HepG2 (cell line): ENCODE measurements at regions of chr1 and their contacts with region 1.

Region 1: DNA sequence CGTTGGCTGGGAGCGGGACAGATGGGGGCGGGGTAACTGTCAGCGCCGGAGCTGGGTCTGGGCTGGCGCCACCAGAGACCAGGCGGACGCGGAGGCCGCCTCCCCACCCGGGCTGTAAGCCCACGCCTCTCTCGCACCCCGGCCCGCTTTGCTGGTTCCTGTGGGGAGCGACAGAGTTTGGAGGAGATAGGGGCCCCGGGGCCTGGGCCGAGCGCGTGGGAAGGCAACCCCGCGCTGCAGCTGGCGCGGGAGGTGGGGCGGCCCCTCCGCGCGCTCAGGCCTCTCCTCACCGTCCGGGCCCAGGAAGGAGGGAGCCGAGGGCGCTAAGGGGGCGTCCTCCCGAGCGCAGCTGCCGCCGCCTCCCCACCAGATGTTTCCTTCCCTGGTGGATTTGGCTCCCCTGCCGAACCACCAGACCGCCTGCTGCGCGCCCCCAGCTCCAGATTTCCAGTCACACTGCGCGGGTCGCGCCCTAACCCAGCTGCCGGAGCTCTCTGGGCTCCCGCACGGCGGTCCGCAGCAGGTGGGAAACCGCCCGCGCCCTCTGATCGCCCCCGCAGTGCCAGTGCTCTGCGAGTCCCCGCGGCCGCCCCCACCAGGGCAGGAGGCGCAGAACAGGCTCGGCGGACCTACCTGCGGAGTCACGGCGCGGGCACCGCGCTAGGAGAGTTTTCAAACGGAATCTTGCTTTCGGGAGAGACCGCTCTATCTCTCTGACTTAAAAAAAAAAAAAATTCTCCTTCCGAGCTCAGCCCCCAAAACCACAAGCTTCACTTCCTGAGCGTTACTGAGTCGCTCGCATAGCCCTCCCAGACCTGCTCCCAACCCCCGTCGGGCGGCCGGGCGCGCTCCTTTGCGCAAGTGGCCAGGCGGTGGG is 1.1 kb downstream of the GFI1 start:
- DNase-seq: peak; percentile 49
- ATAC-seq: peak; percentile 86
- H3K4me3 ChIP-seq: peak overlapping the region; percentile 68 to 89 (median 87)
- H3K27ac ChIP-seq: peak overlapping the region; percentile 77
- H3K4me1 ChIP-seq: peaks cover 24% of the 10 kb centered on the region
- H3K27me3 ChIP-seq: no peaks in the 10 kb centered on the region; a peak in 2 of 5 replicates
- CTCF ChIP-seq: peak; percentile 77
- EP300 ChIP-seq: no peak
- POLR2A ChIP-seq: peak; percentile 48 to 56; a peak in 3 of 4 replicates
- RAD21 ChIP-seq: no peak; the same call in 1 of the 2 replicates

Region 2: GRCh38 chr1:92244376-92244775 is 241.2 kb before region 1 on chr1:
- CTCF ChIA-PET with region 1: no interaction called
- POLR2A ChIA-PET with region 1: no interaction called
- in situ Hi-C with region 1: no loop called
- intact Hi-C with region 1: no loop called
- DNase-seq: no peak
- ATAC-seq: no peak
- H3K4me3 ChIP-seq: no peak overlapping the region
- H3K27ac ChIP-seq: no peak overlapping the region
- H3K4me1 ChIP-seq: no peaks in the 10 kb centered on the region
- H3K27me3 ChIP-seq: no peaks in the 10 kb centered on the region
- CTCF ChIP-seq: no peak
- EP300 ChIP-seq: no peak
- POLR2A ChIP-seq: no peak
- RAD21 ChIP-seq: no peak

Region 3: DNA sequence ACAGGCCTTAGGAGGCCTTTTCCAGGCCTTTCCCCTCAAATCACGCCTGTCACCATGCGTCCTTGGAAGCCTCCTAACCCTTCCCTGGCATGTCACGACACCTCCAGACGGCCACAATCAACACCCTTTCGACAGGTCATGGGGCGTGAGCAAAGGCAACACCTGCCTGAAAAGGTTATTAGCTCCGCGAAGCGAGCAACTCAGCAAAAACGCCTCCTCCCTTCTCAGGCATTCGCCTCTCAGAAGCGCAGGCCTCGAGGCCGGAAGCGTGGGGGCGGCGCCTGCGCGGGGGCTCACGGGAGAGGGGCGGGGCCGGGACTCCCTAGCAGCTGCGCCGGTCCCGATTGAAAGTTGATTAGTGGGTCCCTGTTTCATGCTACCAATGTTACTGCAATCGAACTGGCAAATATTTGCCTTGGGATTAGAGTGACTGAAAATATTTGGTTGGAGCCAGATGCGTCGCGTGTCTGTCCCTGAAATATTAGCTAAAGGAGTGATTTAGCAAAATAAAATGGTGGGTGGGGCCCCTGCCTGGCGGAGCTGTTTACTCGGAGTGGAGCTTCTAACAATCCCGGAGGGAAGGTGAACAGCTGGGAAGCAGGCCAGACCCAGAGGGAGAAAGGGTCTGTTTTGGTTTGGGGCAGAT is 43.8 kb before region 1 on chr1:
- CTCF ChIA-PET with region 1: no interaction called
- POLR2A ChIA-PET with region 1: interaction called, 24 read pairs
- in situ Hi-C with region 1: no loop called
- intact Hi-C with region 1: loop called (anchors 1 kb)
- DNase-seq: peak; percentile 96
- ATAC-seq: peak; percentile 98
- H3K4me3 ChIP-seq: peak overlapping the region; percentile 54 to 76 (median 61)
- H3K27ac ChIP-seq: peak overlapping the region; percentile 82
- H3K4me1 ChIP-seq: peaks cover 23% of the 10 kb centered on the region
- H3K27me3 ChIP-seq: peaks cover 0 to 4% of the 10 kb centered on the region in 2 experiments; a peak in 1 of 5 replicates
- CTCF ChIP-seq: no peak
- EP300 ChIP-seq: peak; percentile 25 to 80; a peak in 2 of 4 replicates
- POLR2A ChIP-seq: peak; percentile 90 to 92
- RAD21 ChIP-seq: no peak

Region 4: GRCh38 chr1:92502247-92502646 is 16.6 kb after region 1 on chr1:
- CTCF ChIA-PET with region 1: no interaction called
- POLR2A ChIA-PET with region 1: interaction called, 26 read pairs
- in situ Hi-C with region 1: no loop called
- intact Hi-C with region 1: loop called (anchors 2 kb)
- DNase-seq: no peak
- ATAC-seq: no peak
- H3K4me3 ChIP-seq: no peak overlapping the region
- H3K27ac ChIP-seq: no peak overlapping the region
- H3K4me1 ChIP-seq: peaks cover 37% of the 10 kb centered on the region
- H3K27me3 ChIP-seq: no peaks in the 10 kb centered on the region
- CTCF ChIP-seq: no peak
- EP300 ChIP-seq: no peak
- POLR2A ChIP-seq: no peak
- RAD21 ChIP-seq: no peak

Region 5: DNA sequence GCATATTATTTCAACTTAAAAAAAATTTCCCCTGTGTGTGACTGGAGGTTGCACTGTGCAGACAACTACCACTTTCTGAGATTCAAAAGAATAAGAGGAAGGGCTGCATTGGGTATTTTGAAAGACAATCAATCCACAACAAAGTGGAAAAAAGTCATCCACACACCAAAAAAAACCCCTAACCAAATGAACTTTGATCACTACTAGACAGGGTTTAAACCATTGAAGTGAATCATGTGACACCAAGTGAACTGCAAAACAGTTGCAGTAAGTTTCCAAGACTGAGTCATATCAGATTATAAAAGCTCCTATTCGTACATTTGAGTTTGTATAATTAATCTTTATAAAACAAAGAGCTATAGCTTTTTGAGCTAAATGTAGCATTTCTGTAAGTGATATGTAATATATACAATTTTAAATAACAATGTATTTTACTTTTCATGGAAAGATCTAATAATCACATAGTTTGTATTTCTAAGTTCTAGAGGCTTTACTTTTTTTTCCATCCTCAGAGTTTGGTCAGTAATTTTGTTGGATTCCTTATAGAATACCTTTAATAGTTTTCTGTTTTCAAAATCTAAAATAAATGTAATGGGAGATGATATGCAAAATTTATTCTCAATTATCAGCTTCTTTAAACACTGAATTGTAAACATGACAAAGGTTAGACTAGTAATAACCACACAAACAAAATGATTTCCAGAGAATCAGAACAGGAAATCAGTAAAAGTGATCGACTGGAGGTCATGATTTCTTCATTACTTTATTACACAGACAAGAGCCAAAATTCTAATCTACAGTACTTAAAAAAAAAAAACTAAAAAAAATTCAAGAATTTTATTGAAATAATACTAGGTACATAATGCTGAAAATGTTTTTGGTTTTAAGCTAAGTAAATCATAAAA is 51.6 kb after region 1 on chr1:
- CTCF ChIA-PET with region 1: no interaction called
- POLR2A ChIA-PET with region 1: interaction called, 15 read pairs
- in situ Hi-C with region 1: no loop called
- intact Hi-C with region 1: loop called (anchors 2 kb)
- DNase-seq: peak; percentile 94
- ATAC-seq: peak; percentile 83
- H3K4me3 ChIP-seq: peak overlapping the region in 1 of 3 experiments; percentile 6; a peak in 1 of 6 replicates
- H3K27ac ChIP-seq: peak overlapping the region; percentile 86
- H3K4me1 ChIP-seq: peaks cover 41% of the 10 kb centered on the region
- H3K27me3 ChIP-seq: no peaks in the 10 kb centered on the region
- CTCF ChIP-seq: no peak
- EP300 ChIP-seq: peak in 1 of 2 experiments; percentile 83; a peak in 2 of 4 replicates
- POLR2A ChIP-seq: no peak
- RAD21 ChIP-seq: no peak

Region 6: GRCh38 chr1:92599184-92599583 is 113.6 kb after region 1 on chr1:
- CTCF ChIA-PET with region 1: no interaction called
- POLR2A ChIA-PET with region 1: interaction called, 4 read pairs
- in situ Hi-C with region 1: loop called (anchors 5 kb)
- intact Hi-C with region 1: loop called (anchors 1 kb)
- DNase-seq: peak; percentile 41
- ATAC-seq: no peak
- H3K4me3 ChIP-seq: no peak overlapping the region
- H3K27ac ChIP-seq: no peak overlapping the region
- H3K4me1 ChIP-seq: no peaks in the 10 kb centered on the region
- H3K27me3 ChIP-seq: no peaks in the 10 kb centered on the region
- CTCF ChIP-seq: peak; percentile 29; the same call in 1 of the 2 replicates
- EP300 ChIP-seq: no peak
- POLR2A ChIP-seq: no peak
- RAD21 ChIP-seq: no peak